ENCODE measurements at regions of chr22 and their contacts with region 1.

Region 1: GRCh38 chr22:43993027-43993760 is 30.9 kb upstream of the PARVB start:
- DNase-seq: peak; percentile 66
- ATAC-seq: peak; percentile 52
- H3K4me3 Mint-ChIP-seq: no peak overlapping the region
- H3K27ac Mint-ChIP-seq: peak overlapping the region; percentile 54
- H3K4me1 Mint-ChIP-seq: peaks cover 22% of the 10 kb centered on the region
- H3K27me3 Mint-ChIP-seq: no peaks in the 10 kb centered on the region

Region 2: GRCh38 chr22:43796567-43796966 is 196.6 kb before region 1 on chr22:
- CTCF ChIA-PET with region 1: no interaction called
- DNase-seq: no peak
- ATAC-seq: no peak
- H3K4me3 Mint-ChIP-seq: no peak overlapping the region
- H3K27ac Mint-ChIP-seq: no peak overlapping the region
- H3K4me1 Mint-ChIP-seq: no peaks in the 10 kb centered on the region
- H3K27me3 Mint-ChIP-seq: peaks cover 5% of the 10 kb centered on the region

Region 3: GRCh38 chr22:44026630-44027511 is 33.7 kb after region 1 on chr22:
- CTCF ChIA-PET with region 1: interaction called, 15 read pairs
- DNase-seq: peak; percentile 91
- ATAC-seq: peak; percentile 74
- H3K4me3 Mint-ChIP-seq: peak overlapping the region; percentile 67
- H3K27ac Mint-ChIP-seq: peak overlapping the region; percentile 89
- H3K4me1 Mint-ChIP-seq: peaks cover 66% of the 10 kb centered on the region
- H3K27me3 Mint-ChIP-seq: no peaks in the 10 kb centered on the region

Region 4: DNA sequence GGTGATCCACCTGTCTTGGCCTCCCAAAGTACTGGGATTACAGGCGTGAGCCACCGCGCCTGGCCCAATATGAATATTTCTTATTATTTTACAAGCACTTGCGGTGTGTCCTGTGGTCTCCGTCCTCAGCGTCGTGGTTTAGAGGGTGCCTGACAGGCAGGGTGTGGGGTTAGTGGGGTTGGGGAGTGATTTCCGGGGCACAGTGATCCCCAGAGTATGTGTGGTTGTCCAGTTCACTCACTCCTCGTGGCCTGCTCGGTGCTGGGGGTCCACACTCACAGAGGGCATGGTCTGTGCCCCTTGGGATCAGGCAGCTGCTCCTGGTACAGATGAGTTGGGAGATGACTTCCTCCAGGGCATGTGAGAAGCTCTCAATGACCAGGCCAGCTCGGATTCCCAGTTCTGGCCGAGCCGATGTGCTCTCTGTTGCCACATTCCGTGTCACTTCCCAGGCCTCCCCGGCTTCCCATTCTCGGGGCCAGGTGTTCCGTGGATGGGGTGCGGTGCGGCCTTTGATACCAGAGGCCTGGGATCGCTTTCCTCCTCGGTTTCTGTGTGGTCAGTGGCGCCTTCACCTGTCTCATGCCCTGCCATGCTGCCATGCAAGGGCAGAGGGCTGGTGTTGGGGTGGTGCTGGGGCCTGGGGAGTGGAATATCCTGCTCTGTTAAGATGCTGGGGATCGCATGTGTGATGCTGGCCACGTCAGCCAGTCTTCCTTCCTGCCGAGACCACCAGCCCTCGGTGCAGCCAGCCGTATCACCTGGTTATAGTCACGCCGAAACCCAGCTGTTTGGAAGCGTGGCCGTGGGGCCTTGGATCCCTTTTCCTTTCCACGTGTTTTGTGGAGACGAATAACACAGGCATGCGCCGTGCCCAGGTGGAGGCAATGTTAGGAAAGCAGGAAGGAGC is 70.5 kb after region 1 on chr22:
- CTCF ChIA-PET with region 1: interaction called, 10 read pairs
- DNase-seq: no peak
- ATAC-seq: peak; percentile 51
- H3K4me3 Mint-ChIP-seq: no peak overlapping the region
- H3K27ac Mint-ChIP-seq: no peak overlapping the region
- H3K4me1 Mint-ChIP-seq: peaks cover 34% of the 10 kb centered on the region
- H3K27me3 Mint-ChIP-seq: no peaks in the 10 kb centered on the region

Region 5: DNA sequence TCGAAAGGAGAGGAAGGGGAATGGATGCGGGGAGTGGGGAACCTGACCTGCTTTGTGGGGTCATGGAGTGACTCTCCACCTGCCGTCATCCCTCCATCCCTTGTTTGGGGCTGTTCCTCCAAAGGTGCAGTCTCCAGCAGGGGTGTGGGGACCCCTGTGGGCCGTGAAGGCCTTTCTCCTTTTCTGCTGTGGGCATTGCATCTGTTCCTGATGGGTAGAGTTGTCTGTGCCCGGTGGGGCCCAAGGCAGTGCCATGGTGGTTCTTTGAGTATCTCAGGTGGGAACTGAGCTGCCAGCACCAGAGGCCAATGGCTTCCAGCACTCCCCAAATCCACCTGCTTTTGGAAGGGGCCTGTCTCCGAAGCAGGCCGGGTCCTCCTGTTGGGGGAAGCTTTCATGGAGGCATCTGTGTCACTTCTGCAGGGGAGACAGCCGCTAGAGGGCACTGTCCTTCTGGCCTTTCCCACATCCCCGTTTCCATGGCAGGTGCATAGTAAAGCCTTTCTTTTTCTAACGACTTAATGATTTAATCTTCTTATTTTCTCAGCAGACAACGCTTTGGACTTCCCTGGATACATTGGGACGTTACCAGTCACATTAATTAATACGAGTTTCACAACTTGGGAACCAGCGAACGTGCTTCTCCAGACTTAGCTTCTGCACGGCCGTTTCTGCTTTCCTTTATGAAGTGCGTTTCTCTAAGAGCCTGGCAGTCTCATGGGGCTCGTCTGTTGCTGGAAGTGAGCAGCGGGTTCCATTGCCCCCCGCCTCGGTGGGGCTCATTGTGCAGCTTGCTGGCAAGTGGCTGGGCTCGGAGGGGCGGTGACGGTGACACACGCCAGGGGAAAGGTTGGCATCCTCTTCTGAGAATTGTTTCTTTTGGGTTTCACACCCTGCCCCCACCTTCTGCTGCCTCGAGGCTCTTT is 88.0 kb after region 1 on chr22:
- CTCF ChIA-PET with region 1: interaction called, 162 read pairs
- DNase-seq: peak; percentile 80
- ATAC-seq: peak; percentile 67
- H3K4me3 Mint-ChIP-seq: no peak overlapping the region
- H3K27ac Mint-ChIP-seq: no peak overlapping the region
- H3K4me1 Mint-ChIP-seq: no peaks in the 10 kb centered on the region
- H3K27me3 Mint-ChIP-seq: no peaks in the 10 kb centered on the region

Region 6: DNA sequence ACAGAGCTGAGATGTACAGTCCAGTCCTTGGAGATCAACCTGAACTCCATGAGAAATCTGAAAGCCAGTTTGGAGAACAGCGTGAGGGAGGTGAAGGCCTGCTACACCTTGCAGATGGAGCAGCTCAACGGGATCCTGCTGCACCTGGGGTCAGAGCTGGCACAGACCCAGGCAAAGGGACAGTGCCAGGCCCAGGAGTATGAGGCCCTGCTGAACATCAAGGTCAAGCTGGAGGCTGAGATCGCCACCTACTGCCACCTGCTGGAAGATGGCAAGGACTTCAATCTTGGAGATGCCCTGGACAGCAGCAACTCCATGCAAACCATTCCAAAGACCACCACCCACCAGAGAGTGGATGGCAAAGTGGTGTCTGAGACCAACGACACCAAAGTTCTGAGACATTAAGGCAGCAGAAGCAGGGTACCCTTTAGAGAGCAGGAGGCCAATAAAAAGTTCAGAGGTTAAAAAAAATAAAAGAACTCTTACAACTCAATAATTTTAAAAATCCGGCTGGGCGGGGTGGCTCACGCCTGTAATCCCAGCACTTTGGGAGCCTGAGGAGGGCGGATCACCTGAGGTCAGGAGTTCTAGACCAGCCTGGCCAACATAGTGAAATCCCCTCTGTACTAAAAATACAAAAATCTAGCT is 574.8 kb after region 1 on chr22:
- CTCF ChIA-PET with region 1: interaction called, 14 read pairs
- DNase-seq: peak; percentile 62
- ATAC-seq: no peak
- H3K4me3 Mint-ChIP-seq: no peak overlapping the region
- H3K27ac Mint-ChIP-seq: no peak overlapping the region
- H3K4me1 Mint-ChIP-seq: no peaks in the 10 kb centered on the region
- H3K27me3 Mint-ChIP-seq: peaks cover 26% of the 10 kb centered on the region